Activated naive CD4-positive, alpha-beta T cell treated with anti-CD3 and anti-CD28 coated beads, Interleukin-2, amount 10 ng/mL, durations not matched to agents 7 days and 5 days (primary cell): ENCODE measurements at regions of chr15 and their contacts with region 1.

Region 1: GRCh38 chr15:65054333-65055200 is 9.4 kb downstream of the SLC51B start:
- DNase-seq: peak; percentile 74
- H3K4me3 Mint-ChIP-seq: no peak overlapping the region
- H3K27ac Mint-ChIP-seq: no peak overlapping the region
- H3K4me1 Mint-ChIP-seq: peaks cover 10% of the 10 kb centered on the region
- H3K27me3 Mint-ChIP-seq: peaks cover 20% of the 10 kb centered on the region

Region 2: DNA sequence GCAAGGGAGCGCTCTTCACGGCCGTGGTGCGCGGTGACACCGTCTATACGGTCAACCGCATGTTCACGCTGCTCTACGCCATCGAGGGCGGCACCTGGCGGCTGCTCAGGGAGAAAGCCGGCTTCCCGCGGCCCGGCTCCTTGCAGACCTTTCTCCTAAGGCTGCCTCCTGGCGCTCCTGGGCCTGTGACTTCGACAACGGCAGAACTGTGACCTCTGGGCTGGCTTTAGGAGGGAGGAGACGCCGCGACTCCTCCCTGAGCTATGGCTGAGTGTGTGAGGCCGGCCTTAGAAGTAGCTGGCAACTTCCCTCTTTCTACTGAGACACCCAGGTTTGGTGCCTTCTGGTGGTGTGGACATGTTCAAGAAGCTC is 23.4 kb after region 1 on chr15:
- CTCF ChIA-PET with region 1: interaction called, 30 read pairs
- DNase-seq: peak; percentile 68
- H3K4me3 Mint-ChIP-seq: no peak overlapping the region
- H3K27ac Mint-ChIP-seq: no peak overlapping the region
- H3K4me1 Mint-ChIP-seq: peaks cover 16% of the 10 kb centered on the region
- H3K27me3 Mint-ChIP-seq: peaks cover 57% of the 10 kb centered on the region

Region 3: DNA sequence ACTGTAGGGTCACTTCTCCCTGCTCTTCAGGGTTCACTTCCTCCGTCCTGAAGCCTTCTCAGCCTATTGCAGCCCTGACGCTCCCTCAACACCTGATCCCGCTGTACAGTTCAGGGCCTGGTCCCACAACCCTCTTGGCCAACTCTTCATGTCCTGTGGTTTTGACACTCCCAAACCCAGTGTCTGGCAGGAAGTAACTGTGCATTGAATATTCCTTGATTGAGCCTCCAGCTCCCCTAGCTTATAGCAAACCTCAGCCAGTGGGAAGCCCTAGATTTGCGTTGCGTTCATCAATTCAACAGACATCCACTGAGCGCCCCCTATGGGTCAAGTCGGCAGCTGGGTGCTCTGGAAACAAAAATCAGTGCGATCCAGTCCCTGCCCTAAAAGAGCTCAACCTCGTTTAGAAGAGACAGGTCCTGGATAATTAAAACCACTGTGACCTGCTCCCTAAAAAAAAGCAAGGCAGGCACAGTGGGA is 46.9 kb after region 1 on chr15:
- CTCF ChIA-PET with region 1: interaction called, 27 read pairs
- DNase-seq: peak; percentile 67
- H3K4me3 Mint-ChIP-seq: no peak overlapping the region
- H3K27ac Mint-ChIP-seq: no peak overlapping the region
- H3K4me1 Mint-ChIP-seq: no peaks in the 10 kb centered on the region
- H3K27me3 Mint-ChIP-seq: no peaks in the 10 kb centered on the region

Region 4: DNA sequence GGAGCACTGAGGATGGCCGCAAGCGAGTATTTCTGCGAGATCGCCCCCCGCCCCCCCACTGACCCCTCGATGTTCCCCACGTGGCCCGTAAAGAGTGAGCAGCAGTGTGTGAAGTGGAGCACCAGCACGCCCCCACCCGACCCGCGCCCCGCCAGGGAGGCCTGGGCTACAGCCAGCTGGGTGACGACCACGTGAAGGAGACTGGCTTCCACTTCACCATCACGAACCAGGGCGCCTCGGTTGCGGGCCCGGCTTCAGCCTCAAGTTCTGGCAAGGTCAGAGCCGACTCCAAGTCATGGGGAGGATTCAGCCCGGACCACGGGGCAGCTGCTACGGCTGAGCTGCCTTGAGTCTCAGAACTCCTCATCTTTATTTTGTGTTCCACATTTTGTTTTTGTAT is 247.5 kb after region 1 on chr15:
- CTCF ChIA-PET with region 1: interaction called, 31 read pairs
- DNase-seq: no peak
- H3K4me3 Mint-ChIP-seq: no peak overlapping the region
- H3K27ac Mint-ChIP-seq: no peak overlapping the region
- H3K4me1 Mint-ChIP-seq: peaks cover 43% of the 10 kb centered on the region
- H3K27me3 Mint-ChIP-seq: no peaks in the 10 kb centered on the region